ENCODE measurements at regions of chr12 and their contacts with region 1.

Region 1: GRCh38 chr12:110583137-110584059 is at the start of gene PPTC7:
- DNase-seq: peak; percentile 98
- ATAC-seq: peak; percentile 95
- H3K4me3 ChIP-seq: peak within 1 kb of the TSS; percentile 74 to 93 (median 87)
- H3K4me3 Mint-ChIP-seq: peak within 1 kb of the TSS; percentile 94
- H3K27ac ChIP-seq: peak within 1 kb of the TSS; percentile 88 to 96
- H3K27ac Mint-ChIP-seq: peak within 1 kb of the TSS; percentile 92
- H3K4me1 ChIP-seq: peaks cover 55 to 64% of the 10 kb centered on the region in 2 donors
- H3K4me1 Mint-ChIP-seq: peaks cover 69% of the 10 kb centered on the region
- H3K27me3 ChIP-seq: no peaks in the 10 kb centered on the region
- H3K27me3 Mint-ChIP-seq: no peaks in the 10 kb centered on the region
- CTCF ChIP-seq: no peak
- total RNA-seq, gene PPTC7: 44.9 and 45.6 TPM in 2 replicates

Region 2: DNA sequence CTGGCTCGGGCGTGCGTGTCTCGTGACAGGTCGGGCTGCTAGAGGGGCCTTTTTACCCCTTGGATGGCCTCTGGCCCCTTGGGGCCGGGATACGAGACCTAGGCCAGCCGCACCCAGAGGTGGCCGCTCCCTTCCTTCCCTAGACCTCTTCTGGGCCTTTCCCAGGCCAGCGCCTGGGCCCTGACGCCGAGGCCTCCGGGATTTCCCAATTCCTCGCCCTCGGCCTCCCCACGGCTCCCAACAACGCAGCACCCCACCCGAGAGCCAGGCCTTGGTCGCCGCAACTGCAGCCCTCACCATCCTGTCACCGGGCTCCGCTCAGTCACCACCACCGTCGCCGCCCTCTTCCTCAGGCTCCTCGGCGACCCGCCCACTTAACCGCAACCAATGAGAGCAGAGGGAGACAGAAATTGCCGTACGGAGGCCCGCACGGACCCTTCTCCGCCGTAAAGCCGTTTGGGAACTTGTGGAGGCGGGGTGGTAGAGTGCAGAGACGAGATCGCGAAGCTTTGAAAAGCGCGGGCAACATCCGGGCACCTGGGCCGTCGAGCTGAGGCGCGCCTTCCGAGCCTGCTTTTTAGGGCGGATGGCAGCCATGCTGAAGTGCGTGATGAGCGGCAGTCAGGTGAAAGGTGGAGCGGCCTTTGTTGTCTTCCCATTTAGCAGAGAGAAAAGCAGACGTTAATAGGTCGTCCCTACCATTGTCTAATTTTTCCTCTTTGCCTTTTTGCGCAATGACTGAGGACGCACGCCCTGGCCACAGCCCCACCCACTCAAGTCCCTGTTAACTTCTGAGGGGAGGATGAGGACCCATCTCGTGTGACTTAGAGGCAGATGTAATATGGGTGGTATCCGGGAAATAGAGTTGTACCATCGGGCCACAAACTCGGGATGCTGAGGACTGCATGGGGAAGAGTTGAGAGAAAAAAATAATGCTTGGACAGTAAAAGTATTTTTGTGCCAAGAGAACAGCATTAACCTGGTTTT is 81.4 kb before region 1 on chr12 and contains the starts of genes RAD9B and VPS29:
- CTCF ChIA-PET with region 1: no interaction called
- POLR2A ChIA-PET with region 1: no interaction called
- intact Hi-C with region 1: loop called (anchors 1 kb)
- DNase-seq: peak; percentile 99
- ATAC-seq: peak; percentile 94
- H3K4me3 ChIP-seq: peak within 1 kb of the TSS; percentile 90 to 99 (median 95)
- H3K4me3 Mint-ChIP-seq: peak within 1 kb of the TSS; percentile 93
- H3K27ac ChIP-seq: peak within 1 kb of the TSS; percentile 85 to 90
- H3K27ac Mint-ChIP-seq: peak within 1 kb of the TSS; percentile 96
- H3K4me1 ChIP-seq: peaks cover 19 to 20% of the 10 kb centered on the region in 2 donors
- H3K4me1 Mint-ChIP-seq: peaks cover 29% of the 10 kb centered on the region
- H3K27me3 ChIP-seq: no peaks in the 10 kb centered on the region
- H3K27me3 Mint-ChIP-seq: no peaks in the 10 kb centered on the region
- CTCF ChIP-seq: no peak
- total RNA-seq, gene RAD9B: 1.5 and 1.7 TPM in 2 replicates
- total RNA-seq, gene VPS29: 117 and 118 TPM in 2 replicates

Region 3: GRCh38 chr12:110543252-110543959 is 40.0 kb before region 1 on chr12:
- CTCF ChIA-PET with region 1: no interaction called
- POLR2A ChIA-PET with region 1: no interaction called
- intact Hi-C with region 1: loop called (anchors 5 kb)
- DNase-seq: no peak
- ATAC-seq: peak; percentile 31
- H3K4me3 ChIP-seq: no peak overlapping the region
- H3K4me3 Mint-ChIP-seq: peak overlapping the region; percentile 44
- H3K27ac ChIP-seq: peak overlapping the region; percentile 17 to 55
- H3K27ac Mint-ChIP-seq: peak overlapping the region; percentile 81
- H3K4me1 ChIP-seq: peaks cover 0 to 13% of the 10 kb centered on the region in 2 donors
- H3K4me1 Mint-ChIP-seq: peaks cover 30% of the 10 kb centered on the region
- H3K27me3 ChIP-seq: no peaks in the 10 kb centered on the region
- H3K27me3 Mint-ChIP-seq: no peaks in the 10 kb centered on the region
- CTCF ChIP-seq: no peak

Region 4: DNA sequence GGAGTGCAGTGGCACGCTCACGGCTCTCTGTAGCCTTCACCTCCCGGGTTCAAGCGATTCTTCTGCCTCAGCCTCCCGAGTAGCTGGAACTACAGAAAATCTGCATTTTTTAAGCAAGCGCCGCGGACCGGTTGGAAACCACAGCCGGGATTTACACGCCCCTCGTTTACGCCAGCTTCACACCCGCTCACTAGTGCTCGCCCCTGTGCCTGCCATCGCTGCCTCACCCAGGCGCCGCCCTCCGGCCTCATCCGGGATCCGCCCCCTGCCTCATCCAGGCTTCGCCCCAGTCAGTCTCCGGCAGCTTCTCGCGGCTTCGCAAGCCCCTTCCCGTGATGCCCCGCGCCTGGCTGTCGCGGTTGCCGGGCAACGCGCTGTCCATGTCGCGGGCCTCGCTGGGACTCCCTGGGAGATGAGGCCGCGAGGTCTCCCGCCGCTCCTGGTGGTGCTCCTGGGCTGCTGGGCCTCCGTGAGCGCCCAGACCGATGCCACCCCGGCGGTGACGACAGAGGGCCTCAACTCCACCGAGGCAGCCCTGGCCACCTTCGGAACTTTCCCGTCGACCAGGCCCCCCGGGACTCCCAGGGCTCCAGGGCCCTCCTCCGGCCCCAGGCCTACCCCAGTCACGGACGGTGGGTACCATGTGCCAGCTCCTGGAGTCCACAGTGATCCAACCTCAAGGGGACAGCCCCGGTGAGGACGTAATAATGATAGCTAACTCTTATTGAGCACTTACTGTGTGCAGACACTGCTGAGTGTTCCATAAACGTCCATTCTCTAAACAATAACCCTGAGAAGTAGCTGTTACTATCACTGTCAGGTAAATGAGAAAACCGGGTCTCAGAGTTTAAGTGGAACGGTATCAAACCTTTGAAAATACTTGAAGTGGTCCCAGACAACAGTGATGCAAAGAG is 30.6 kb after region 1 on chr12 and contains the start of gene TCTN1:
- CTCF ChIA-PET with region 1: no interaction called
- POLR2A ChIA-PET with region 1: interaction called, 3 read pairs
- intact Hi-C with region 1: loop called (anchors 1 kb)
- DNase-seq: peak; percentile 94
- ATAC-seq: peak; percentile 99
- H3K4me3 ChIP-seq: peak within 1 kb of the TSS; percentile 57 to 84 (median 70)
- H3K4me3 Mint-ChIP-seq: peak within 1 kb of the TSS; percentile 91
- H3K27ac ChIP-seq: peak within 1 kb of the TSS; percentile 83 to 98
- H3K27ac Mint-ChIP-seq: peak within 1 kb of the TSS; percentile 96
- H3K4me1 ChIP-seq: peaks cover 42 to 65% of the 10 kb centered on the region in 2 donors
- H3K4me1 Mint-ChIP-seq: peaks cover 49% of the 10 kb centered on the region
- H3K27me3 ChIP-seq: no peaks in the 10 kb centered on the region
- H3K27me3 Mint-ChIP-seq: no peaks in the 10 kb centered on the region
- CTCF ChIP-seq: no peak
- total RNA-seq, gene TCTN1: 69.8 and 74.5 TPM in 2 replicates

Region 5: DNA sequence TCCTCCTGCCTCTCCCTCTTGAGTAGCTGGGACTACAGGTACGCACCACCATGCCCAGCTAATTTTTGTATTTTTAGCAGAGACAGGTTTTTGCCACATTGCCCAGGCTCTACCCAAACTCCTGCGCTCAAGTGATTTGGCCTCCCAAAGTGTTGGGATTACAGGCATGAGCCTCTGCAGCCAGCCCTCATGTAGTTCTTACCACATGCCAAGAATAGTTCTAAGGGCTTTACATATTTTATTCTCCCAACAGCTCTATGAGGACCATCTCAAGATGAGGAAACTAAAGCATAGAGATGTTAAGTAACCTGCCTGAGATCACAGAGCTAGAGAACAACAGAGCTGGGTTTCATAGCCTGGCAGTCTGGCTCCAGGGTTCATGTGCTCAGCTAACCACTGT is 1145.4 kb after region 1 on chr12:
- CTCF ChIA-PET with region 1: no interaction called
- POLR2A ChIA-PET with region 1: no interaction called
- intact Hi-C with region 1: no loop called
- DNase-seq: no peak
- ATAC-seq: no peak
- H3K4me3 ChIP-seq: no peak overlapping the region
- H3K4me3 Mint-ChIP-seq: no peak overlapping the region
- H3K27ac ChIP-seq: no peak overlapping the region
- H3K27ac Mint-ChIP-seq: no peak overlapping the region
- H3K4me1 ChIP-seq: peaks cover 0 to 12% of the 10 kb centered on the region in 2 donors
- H3K4me1 Mint-ChIP-seq: peaks cover 11% of the 10 kb centered on the region
- H3K27me3 ChIP-seq: no peaks in the 10 kb centered on the region
- H3K27me3 Mint-ChIP-seq: no peaks in the 10 kb centered on the region
- CTCF ChIP-seq: no peak

Measured in B cell (primary cell).